ENCODE measurements at regions of chr10 and their contacts with region 1.

Region 1: DNA sequence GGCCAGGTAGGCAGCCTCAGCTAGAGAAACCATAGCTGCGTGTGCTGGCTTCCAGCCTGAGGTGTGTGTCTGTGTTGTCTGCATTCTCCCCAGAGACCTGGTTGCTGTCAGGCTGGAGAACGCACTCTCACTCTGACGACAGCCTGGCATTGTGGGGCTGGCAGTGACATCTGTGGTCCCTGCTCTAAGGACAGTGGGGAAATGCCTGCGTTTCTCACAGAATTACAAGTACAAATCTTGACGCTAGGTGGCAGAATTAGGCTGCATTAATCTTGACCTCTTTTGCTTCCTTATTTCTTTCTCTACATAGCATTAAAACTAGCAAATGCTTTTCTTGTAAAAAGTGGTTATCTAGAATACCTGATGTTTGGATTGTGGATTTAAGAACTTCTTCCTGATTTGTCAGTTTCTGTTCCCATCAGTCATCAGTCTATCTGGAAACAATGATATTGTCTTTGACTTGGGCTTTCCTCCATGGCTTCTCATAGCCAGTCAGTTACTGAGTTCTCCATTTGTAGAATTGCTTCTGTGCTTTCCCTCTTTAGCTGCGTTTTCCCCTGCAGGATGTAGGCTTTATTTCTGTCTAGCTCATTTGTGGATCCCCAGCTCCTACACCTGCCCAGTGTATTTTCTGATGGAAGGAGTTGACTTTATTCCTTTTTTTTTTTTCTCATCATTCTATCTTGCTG is 86.0 kb downstream of the FANK1 start:
- DNase-seq: no peak
- H3K4me3 ChIP-seq: no peak overlapping the region
- H3K27ac ChIP-seq: no peak overlapping the region
- H3K4me1 ChIP-seq: no peaks in the 10 kb centered on the region
- H3K27me3 ChIP-seq: no peaks in the 10 kb centered on the region
- CTCF ChIP-seq: peak in 3 of 4 experiments; percentile 48 to 63 (median 61)
- EP300 ChIP-seq: no peak
- POLR2A ChIP-seq: no peak

Region 2: GRCh38 chr10:126387023-126387921 is 404.9 kb after region 1 on chr10:
- intact Hi-C with region 1: loop called (anchors 10 kb)
- DNase-seq: peak; percentile 74
- H3K4me3 ChIP-seq: peak overlapping the region in 3 of 4 donors; percentile 45 to 53 (median 51)
- H3K27ac ChIP-seq: peak overlapping the region in 2 of 4 donors; percentile 26 to 34
- H3K4me1 ChIP-seq: peaks cover 0 to 20% (median 19%) of the 10 kb centered on the region in 4 donors
- H3K27me3 ChIP-seq: peaks cover 13 to 45% (median 17%) of the 10 kb centered on the region in 3 donors
- CTCF ChIP-seq: peak in 3 of 4 experiments; percentile 34 to 57 (median 53)
- EP300 ChIP-seq: no peak
- POLR2A ChIP-seq: no peak

Region 3: GRCh38 chr10:126504063-126504739 is 521.8 kb after region 1 on chr10:
- intact Hi-C with region 1: loop called (anchors 5 kb)
- DNase-seq: no peak
- H3K4me3 ChIP-seq: no peak overlapping the region
- H3K27ac ChIP-seq: no peak overlapping the region
- H3K4me1 ChIP-seq: no peaks in the 10 kb centered on the region
- H3K27me3 ChIP-seq: no peaks in the 10 kb centered on the region
- CTCF ChIP-seq: peak in 3 of 4 experiments; percentile 38 to 54 (median 46)
- EP300 ChIP-seq: no peak
- POLR2A ChIP-seq: no peak

Region 4: DNA sequence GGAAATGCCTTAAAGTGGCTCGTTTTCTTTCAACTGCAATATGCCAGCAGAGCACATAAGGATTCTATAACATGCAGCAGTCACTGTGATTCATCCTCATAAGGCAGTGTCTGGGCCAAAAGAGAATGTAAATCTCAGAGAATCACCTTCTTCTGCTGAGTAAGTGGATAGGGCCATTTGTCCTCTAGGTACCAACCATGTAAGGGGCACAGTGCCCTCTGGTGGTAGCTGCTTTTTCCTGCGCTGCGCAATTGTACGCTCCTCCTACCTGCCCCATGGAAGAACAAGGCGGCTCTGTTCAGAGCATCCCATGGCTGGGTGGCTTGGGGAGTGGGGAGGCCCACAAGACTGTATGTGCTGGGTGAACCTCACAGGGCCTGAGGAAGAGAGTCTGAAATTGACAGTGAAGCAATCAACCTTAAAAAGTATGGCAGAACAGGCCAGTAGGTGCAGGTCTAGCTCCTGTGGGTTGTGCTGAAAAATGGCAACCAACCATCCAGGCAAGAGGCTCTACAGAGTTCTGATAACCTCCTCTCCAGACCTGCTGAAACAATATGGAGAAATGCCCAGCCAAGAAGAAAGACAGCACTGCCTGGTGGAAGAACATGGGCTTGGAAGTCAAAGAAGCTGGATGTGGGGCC is 766.7 kb after region 1 on chr10:
- intact Hi-C with region 1: loop called (anchors 5 kb)
- DNase-seq: peak; percentile 74
- H3K4me3 ChIP-seq: no peak overlapping the region
- H3K27ac ChIP-seq: no peak overlapping the region
- H3K4me1 ChIP-seq: no peaks in the 10 kb centered on the region
- H3K27me3 ChIP-seq: no peaks in the 10 kb centered on the region
- CTCF ChIP-seq: peak in 3 of 4 experiments; percentile 23 to 43 (median 36)
- EP300 ChIP-seq: no peak
- POLR2A ChIP-seq: no peak

Region 5: DNA sequence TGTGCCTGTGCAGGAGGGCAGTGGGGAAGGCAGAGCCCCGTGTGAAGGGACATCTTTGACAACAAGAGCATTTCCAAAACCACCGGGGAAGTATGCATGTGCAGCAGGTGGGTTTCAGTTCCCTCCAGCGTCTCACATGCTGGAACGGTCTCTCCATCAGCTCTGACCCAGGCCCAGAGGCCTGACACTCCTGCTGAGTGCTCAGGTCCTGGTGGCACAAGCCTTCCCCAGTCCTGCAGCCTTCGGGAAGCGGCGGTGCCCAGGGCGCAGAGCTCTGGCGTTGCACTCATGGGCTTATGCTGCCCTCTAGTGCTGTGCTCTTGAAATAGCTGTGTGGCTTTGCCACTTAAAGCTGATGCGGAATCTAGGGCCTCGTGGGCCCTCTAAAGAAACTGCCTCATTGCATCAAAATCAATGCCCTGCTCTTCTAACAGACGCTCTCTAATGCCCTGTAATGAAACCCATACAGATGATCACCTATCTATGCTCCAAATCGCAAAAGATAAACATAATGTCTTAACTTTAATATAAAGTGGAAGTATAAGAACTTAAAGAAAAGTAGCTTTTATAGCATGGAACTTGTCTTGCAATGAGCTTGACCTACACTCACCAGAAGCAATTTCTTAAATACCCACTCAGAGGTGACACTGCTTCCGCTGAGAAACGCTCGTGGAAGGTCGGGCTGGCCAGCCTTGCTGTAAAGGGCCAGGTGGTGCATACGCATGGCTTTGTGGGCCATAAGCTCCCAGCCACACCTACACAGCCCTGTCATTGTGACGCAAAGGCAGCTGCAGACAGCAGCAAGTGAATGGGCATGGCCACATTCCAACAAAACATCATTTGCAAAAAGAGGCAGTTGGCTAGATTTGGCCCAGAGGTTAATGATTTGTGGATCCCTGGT is 1871.7 kb after region 1 on chr10:
- intact Hi-C with region 1: loop called (anchors 5 kb)
- DNase-seq: peak; percentile 78
- H3K4me3 ChIP-seq: no peak overlapping the region
- H3K27ac ChIP-seq: no peak overlapping the region
- H3K4me1 ChIP-seq: no peaks in the 10 kb centered on the region
- H3K27me3 ChIP-seq: peaks cover 0 to 11% (median 0%) of the 10 kb centered on the region in 3 donors
- CTCF ChIP-seq: peak; percentile 51 to 83 (median 64)
- EP300 ChIP-seq: no peak
- POLR2A ChIP-seq: no peak

Measured in sigmoid colon (tissue), 7 donors.